ENCODE measurements at regions of chr2 and their contacts with region 1.

Region 1: GRCh38 chr2:40049781-40050180 is 270.7 kb upstream of the THUMPD2 start:
- DNase-seq: no peak
- ATAC-seq: no peak
- H3K4me3 ChIP-seq: no peak overlapping the region
- H3K27ac ChIP-seq: no peak overlapping the region
- H3K4me1 ChIP-seq: no peaks in the 10 kb centered on the region
- H3K27me3 ChIP-seq: peaks cover 30% of the 10 kb centered on the region
- CTCF ChIP-seq: no peak
- POLR2A ChIP-seq: no peak
- RAD21 ChIP-seq: no peak

Region 2: DNA sequence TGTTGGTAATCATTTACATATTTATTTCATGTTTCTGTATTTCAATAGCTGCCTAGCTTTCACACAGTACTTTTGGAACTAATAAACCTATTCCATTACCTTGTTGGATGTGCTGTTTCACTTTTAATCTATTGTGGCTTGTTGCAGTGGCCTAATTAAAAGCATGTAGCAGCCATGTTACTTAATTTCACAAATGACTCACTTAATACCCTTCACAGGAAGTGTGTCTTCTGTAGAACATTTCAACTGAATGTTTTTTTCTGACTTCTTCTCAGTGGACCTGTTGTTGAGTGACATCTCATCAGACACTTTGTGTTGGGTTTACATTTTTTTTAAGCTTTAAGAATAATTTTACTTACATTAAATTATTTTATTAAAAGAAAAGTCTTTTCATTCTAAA is 10.2 kb before region 1 on chr2:
- CTCF ChIA-PET with region 1: no interaction called
- POLR2A ChIA-PET with region 1: no interaction called
- RAD21 ChIA-PET with region 1: no interaction called
- intact Hi-C with region 1: loop called (anchors 2 kb)
- DNase-seq: no peak
- ATAC-seq: no peak
- H3K4me3 ChIP-seq: no peak overlapping the region
- H3K27ac ChIP-seq: no peak overlapping the region
- H3K4me1 ChIP-seq: no peaks in the 10 kb centered on the region
- H3K27me3 ChIP-seq: peaks cover 4% of the 10 kb centered on the region; the same call in 1 of the 2 replicates
- CTCF ChIP-seq: no peak
- POLR2A ChIP-seq: no peak
- RAD21 ChIP-seq: no peak